CD4-positive, alpha-beta memory T cell (primary cell): ENCODE measurements at regions of chr12 and their contacts with region 1.

Region 1: DNA sequence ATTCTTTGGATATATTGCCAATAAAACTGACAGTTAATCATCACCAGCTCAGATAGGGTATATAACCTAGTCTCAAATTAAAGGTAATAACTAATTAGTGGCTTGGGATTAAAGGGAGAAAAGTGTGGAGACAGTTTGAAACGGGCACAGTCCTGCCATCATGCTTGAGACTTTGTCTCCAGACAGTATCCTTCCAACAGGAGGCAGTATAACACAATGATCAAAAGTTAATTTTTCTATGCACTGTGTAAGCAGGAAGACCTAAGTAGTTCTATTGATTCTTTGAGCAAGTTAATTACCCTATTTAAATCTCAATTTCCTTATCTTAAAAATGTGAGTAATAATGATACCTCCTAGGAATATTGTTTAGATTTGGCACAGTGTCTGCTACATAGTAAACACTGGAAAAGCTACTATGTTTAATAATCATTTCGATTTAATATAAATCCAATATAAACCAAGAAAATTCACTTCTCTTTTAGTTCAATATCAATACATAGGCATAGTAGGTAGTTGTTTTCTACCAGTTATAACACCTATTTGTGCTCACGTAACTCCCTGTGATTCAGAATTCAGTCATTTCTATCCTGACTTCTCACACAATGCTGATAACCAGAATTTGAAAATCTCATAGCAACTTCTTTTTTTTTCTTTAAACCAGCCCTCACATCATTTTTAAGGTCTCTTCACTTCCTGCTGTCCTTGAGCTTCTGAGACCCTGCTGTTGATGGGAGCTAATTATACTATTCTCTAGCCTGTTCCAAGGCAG is 53.7 kb downstream of the GALNT4 start:
- DNase-seq: peak in 4 of 5 donors; percentile 47 to 55 (median 53)
- H3K4me3 ChIP-seq: no peak overlapping the region
- H3K4me3 Mint-ChIP-seq: peak overlapping the region in 2 of 8 donors; percentile 41 to 55
- H3K27ac ChIP-seq: no peak overlapping the region
- H3K27ac Mint-ChIP-seq: peak overlapping the region in 4 of 7 donors; percentile 28 to 84 (median 76)
- H3K4me1 ChIP-seq: peaks cover 52% of the 10 kb centered on the region
- H3K4me1 Mint-ChIP-seq: peaks cover 34 to 60% (median 46%) of the 10 kb centered on the region in 4 donors
- H3K27me3 ChIP-seq: no peaks in the 10 kb centered on the region
- H3K27me3 Mint-ChIP-seq: no peaks in the 10 kb centered on the region

Region 2: DNA sequence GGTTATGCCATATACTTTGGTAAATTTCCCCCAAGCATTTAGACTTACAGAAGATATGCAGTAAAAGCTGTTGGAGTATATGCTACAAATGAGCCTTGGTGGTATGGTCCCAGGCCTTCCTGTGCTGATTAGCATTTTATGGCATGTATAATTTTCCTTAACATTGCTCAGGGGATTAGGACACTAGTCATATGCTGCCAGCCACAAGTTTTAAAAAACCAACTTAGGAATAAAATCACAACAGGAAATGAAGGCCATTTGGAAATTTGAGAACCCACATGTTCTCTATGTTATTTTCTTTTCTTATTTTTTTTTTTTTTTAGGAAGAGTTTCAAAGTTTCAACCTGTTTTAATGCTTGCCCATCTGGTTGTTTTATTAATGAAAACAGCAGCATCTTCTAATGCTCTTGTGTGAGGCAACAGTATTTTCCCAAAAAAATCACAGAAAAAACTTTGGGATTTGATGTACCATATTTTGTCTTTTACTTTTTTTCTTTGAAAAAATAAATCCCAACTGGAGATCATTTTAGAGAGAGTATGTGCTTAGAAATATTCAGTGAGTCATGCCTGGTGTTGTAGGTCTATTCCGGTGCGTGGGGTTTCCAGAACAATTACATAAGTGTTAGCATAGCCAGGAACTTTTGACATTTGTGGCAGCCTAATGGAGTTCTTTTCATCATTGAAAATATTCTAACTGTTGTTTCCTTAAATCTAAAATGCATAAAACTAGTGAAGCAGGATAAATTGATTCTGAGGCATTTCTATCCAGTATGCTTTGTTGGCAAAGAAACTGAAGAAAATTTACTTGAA is 97.0 kb before region 1 on chr12:
- CTCF ChIA-PET with region 1: no interaction called
- POLR2A ChIA-PET with region 1: no interaction called
- intact Hi-C with region 1: no loop called
- DNase-seq: no peak
- H3K4me3 ChIP-seq: no peak overlapping the region
- H3K4me3 Mint-ChIP-seq: no peak overlapping the region
- H3K27ac ChIP-seq: no peak overlapping the region
- H3K27ac Mint-ChIP-seq: no peak overlapping the region
- H3K4me1 ChIP-seq: peaks cover 8% of the 10 kb centered on the region
- H3K4me1 Mint-ChIP-seq: peaks cover 9 to 14% (median 10%) of the 10 kb centered on the region in 4 donors
- H3K27me3 ChIP-seq: no peaks in the 10 kb centered on the region
- H3K27me3 Mint-ChIP-seq: no peaks in the 10 kb centered on the region

Region 3: GRCh38 chr12:89529738-89530137 is 58.8 kb after region 1 on chr12:
- CTCF ChIA-PET with region 1: interaction called, 185 read pairs
- POLR2A ChIA-PET with region 1: interaction called, 23 read pairs
- intact Hi-C with region 1: loop called (anchors 1 kb)
- DNase-seq: peak in 4 of 5 donors; percentile 47 to 57 (median 52)
- H3K4me3 ChIP-seq: no peak overlapping the region
- H3K4me3 Mint-ChIP-seq: no peak overlapping the region
- H3K27ac ChIP-seq: no peak overlapping the region
- H3K27ac Mint-ChIP-seq: peak overlapping the region in 2 of 7 donors; percentile 12 to 81
- H3K4me1 ChIP-seq: peaks cover 11% of the 10 kb centered on the region
- H3K4me1 Mint-ChIP-seq: peaks cover 7 to 23% (median 14%) of the 10 kb centered on the region in 4 donors
- H3K27me3 ChIP-seq: no peaks in the 10 kb centered on the region
- H3K27me3 Mint-ChIP-seq: no peaks in the 10 kb centered on the region

Region 4: DNA sequence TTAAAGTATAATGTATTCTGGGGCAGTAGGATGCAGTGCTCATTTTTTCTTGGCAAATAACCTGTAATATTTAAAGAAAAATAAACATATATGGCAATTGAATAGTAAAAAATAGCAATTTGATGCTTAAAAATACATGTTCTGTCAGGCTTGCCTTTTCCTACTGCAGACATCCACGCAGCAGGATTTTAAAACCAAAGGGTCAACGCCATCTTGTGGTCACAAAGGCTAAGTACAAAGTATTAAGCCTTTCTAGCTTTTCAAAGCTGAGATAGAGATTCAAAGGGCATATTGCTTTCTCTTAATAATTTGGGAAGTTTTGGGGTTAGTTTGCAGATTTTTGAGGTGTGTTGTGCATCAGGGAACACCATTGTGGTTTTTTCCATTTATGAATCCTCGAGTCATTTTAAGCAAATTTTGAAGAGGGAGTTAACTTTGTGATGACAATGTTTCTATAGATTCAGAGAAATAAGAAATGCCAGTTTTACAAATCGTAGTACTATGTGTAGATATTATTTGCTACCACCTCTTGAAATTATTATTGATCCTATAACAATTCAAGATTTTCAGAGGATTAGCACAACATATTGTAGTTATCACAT is 1488.7 kb after region 1 on chr12:
- CTCF ChIA-PET with region 1: no interaction called
- POLR2A ChIA-PET with region 1: no interaction called
- intact Hi-C with region 1: loop called (anchors 5 kb)
- DNase-seq: peak in 4 of 5 donors; percentile 22 to 30 (median 28)
- H3K4me3 ChIP-seq: no peak overlapping the region
- H3K4me3 Mint-ChIP-seq: no peak overlapping the region
- H3K27ac ChIP-seq: no peak overlapping the region
- H3K27ac Mint-ChIP-seq: no peak overlapping the region
- H3K4me1 ChIP-seq: no peaks in the 10 kb centered on the region
- H3K4me1 Mint-ChIP-seq: no peaks in the 10 kb centered on the region
- H3K27me3 ChIP-seq: no peaks in the 10 kb centered on the region
- H3K27me3 Mint-ChIP-seq: no peaks in the 10 kb centered on the region